ENCODE measurements at regions of chr9 and their contacts with region 1.

Region 1: DNA sequence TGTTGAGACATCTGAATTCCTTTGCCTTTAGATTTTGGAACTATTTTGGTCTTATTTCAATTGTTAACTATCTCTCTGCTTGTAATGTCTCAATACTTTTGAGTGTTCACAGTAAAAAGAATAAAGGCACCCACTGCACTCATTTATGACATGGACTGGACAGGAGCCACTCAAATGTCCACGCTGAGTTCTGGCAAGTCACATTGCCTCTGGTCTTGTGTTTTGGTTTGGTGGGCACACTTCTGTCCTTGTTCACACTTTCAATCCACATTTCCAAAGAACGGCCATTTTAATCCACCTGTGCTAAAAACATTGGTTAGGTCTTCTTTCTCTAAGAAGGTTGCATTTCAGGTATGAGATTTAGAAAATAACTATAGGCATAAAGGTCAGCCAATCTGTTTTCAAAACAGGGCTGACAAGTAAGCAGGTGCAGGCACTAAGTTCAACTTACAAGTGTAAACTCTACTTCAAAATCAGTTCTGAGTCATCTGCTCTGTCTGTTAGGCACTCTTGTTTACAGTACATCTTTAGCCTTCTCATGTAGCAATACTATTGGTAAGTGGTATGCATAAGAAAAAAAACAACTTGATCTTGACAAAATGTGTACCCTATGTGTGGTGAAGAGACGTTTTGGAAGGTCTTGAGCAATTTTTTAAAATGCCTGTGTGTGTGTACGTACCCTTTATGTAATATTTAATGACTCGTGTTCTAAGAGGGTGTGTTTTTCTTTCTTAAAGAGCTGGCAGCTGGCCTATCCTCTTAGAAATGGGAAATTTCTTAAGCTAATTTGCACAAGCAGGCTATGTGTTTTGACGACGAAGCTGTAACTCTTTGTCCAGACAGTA is 31.5 kb upstream of the ZFAND5 start:
- DNase-seq: no peak
- ATAC-seq: no peak
- H3K4me3 ChIP-seq: no peak overlapping the region
- H3K27ac ChIP-seq: no peak overlapping the region
- H3K4me1 ChIP-seq: no peaks in the 10 kb centered on the region
- H3K27me3 ChIP-seq: no peaks in the 10 kb centered on the region; a peak in 2 of 5 replicates
- CTCF ChIP-seq: no peak
- EP300 ChIP-seq: no peak
- POLR2A ChIP-seq: no peak
- RAD21 ChIP-seq: no peak

Region 2: GRCh38 chr9:72292256-72292682 is 104.2 kb before region 1 on chr9:
- CTCF ChIA-PET with region 1: no interaction called
- POLR2A ChIA-PET with region 1: no interaction called
- in situ Hi-C with region 1: no loop called
- intact Hi-C with region 1: loop called (anchors 10 kb)
- DNase-seq: peak in 1 of 4 experiments; percentile 13
- ATAC-seq: no peak
- H3K4me3 ChIP-seq: no peak overlapping the region
- H3K27ac ChIP-seq: no peak overlapping the region
- H3K4me1 ChIP-seq: no peaks in the 10 kb centered on the region; a peak in 2 of 5 replicates
- H3K27me3 ChIP-seq: peaks cover 0 to 6% of the 10 kb centered on the region in 2 experiments; a peak in 2 of 5 replicates
- CTCF ChIP-seq: peak in 2 of 3 experiments; percentile 27 to 48; a peak in 3 of 6 replicates
- EP300 ChIP-seq: no peak
- POLR2A ChIP-seq: no peak
- RAD21 ChIP-seq: peak; percentile 50 to 63

Region 3: DNA sequence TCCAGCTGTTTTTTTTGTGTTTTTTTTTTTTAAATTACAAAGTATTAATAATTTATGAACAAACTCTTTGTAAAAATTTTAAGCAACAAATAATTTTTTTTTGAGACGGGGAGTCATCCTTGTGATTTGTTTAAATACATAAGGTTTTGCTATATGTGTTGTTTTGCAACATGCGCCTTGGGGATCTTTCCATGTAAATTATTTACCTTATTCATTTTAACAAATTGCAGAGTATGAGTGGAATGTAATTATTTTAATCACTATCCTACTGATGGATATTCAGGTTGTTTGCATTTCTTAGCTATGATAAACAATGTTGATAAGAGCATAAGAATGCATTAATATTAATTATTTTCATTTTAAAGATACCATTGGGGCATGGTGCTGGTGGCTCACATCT is 17.3 kb before region 1 on chr9:
- CTCF ChIA-PET with region 1: no interaction called
- POLR2A ChIA-PET with region 1: no interaction called
- in situ Hi-C with region 1: no loop called
- intact Hi-C with region 1: no loop called
- DNase-seq: no peak
- ATAC-seq: no peak
- H3K4me3 ChIP-seq: no peak overlapping the region
- H3K27ac ChIP-seq: no peak overlapping the region
- H3K4me1 ChIP-seq: no peaks in the 10 kb centered on the region
- H3K27me3 ChIP-seq: peaks cover 0 to 2% of the 10 kb centered on the region in 2 experiments; a peak in 2 of 5 replicates
- CTCF ChIP-seq: no peak
- EP300 ChIP-seq: no peak
- POLR2A ChIP-seq: no peak
- RAD21 ChIP-seq: no peak